Activated CD4-positive, alpha-beta memory T cell treated with anti-CD3 and anti-CD28 coated beads, Interleukin-2, amount 10 ng/mL, durations not matched to agents 7 days and 5 days (primary cell): ENCODE measurements at regions of chr10 and their contacts with region 1.

Region 1: DNA sequence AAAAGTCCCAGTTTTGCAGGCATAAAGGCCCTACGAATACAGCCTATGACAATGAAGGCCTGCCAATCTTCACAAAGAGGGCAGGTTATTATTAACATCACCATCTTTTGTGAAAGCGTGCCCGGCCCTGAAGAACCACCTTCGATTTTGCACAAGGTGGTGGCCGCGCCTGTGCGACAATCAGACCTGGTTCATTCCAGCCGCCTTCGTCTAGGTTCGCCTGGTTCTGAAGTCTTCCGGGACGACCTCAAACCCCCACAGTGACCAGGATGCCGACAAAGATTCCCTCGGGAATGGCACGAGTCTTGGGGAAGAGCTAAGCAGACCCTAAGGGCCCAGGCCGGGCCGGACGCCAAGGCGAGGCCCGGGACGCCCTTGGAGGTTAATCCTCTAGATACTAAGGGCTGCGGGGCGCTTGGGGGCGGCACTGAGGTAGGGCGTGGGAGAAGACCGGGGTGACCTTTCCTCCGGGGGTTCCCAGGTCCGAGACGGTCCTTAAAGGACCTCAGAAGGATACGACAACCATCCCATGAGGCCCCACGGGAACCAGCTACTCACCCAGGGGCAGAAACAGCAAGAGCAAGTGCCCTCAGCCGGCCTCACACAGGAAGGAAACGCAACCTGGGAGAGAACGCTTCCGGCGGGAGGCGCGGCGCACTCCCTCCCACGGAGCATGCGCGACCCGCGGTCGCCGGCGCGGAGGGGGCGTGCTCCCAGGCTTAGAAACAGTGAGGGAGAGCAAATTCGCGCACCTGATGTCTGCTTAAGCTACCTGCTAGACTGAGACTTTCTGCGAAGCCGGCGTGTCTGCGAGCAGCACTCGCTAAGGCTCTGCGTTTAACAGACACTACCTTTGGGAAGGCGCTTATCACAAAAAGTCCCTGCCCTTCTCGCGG is at the start of gene ATAD1:
- DNase-seq: peak; percentile 91
- H3K4me3 Mint-ChIP-seq: peak within 1 kb of the TSS; percentile 98
- H3K27ac Mint-ChIP-seq: peak within 1 kb of the TSS; percentile 82
- H3K4me1 Mint-ChIP-seq: peaks cover 35% of the 10 kb centered on the region
- H3K27me3 Mint-ChIP-seq: peaks cover 2% of the 10 kb centered on the region
- total RNA-seq, gene ATAD1: 38.5 to 42.2 TPM

Region 2: GRCh38 chr10:87842776-87843497 is 25.1 kb after region 1 on chr10:
- CTCF ChIA-PET with region 1: interaction called, 5 read pairs
- POLR2A ChIA-PET with region 1: interaction called, 16 read pairs
- DNase-seq: no peak
- H3K4me3 Mint-ChIP-seq: no peak overlapping the region
- H3K27ac Mint-ChIP-seq: no peak overlapping the region
- H3K4me1 Mint-ChIP-seq: peaks cover 10% of the 10 kb centered on the region
- H3K27me3 Mint-ChIP-seq: no peaks in the 10 kb centered on the region

Region 3: GRCh38 chr10:88386821-88387773 is 569.2 kb after region 1 on chr10:
- CTCF ChIA-PET with region 1: interaction called, 3 read pairs
- POLR2A ChIA-PET with region 1: interaction called, 26 read pairs
- DNase-seq: no peak
- H3K4me3 Mint-ChIP-seq: no peak overlapping the region
- H3K27ac Mint-ChIP-seq: no peak overlapping the region
- H3K4me1 Mint-ChIP-seq: peaks cover 27% of the 10 kb centered on the region
- H3K27me3 Mint-ChIP-seq: no peaks in the 10 kb centered on the region